AG04449 (cell line): ENCODE measurements at regions of chr7 and their contacts with region 1.

Region 1: DNA sequence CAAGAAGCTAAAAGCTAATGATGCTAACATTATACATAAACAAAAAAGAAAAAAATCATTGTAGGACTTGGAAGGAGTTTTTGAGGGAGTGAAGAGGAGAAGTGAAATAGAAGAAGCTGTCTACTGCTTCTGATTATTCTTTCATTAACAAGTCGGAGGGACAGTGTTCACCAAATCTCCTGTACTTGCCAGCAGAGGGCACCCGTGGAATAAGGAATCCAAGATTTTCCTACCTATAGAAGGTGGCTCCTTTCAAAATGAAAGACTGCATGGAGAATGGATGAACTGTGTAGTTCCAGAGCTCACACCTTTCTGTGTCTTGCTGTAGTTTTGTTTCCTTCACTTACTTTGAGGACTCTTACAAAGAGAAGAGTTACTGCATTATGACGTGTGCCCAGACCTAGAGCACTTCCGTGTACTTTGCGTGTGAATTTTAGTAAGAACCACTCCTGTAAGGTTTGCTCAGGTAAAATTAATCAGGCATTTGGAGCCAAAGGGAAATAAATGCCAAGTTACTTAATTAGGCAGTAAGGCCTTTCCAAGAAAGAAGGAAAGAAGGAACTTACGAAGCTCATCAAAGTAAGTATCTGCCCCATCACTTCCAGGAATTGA is 145.1 kb downstream of the SEMA3D start:
- DNase-seq: no peak
- H3K4me3 ChIP-seq: no peak overlapping the region
- CTCF ChIP-seq: peak; percentile 71

Region 2: DNA sequence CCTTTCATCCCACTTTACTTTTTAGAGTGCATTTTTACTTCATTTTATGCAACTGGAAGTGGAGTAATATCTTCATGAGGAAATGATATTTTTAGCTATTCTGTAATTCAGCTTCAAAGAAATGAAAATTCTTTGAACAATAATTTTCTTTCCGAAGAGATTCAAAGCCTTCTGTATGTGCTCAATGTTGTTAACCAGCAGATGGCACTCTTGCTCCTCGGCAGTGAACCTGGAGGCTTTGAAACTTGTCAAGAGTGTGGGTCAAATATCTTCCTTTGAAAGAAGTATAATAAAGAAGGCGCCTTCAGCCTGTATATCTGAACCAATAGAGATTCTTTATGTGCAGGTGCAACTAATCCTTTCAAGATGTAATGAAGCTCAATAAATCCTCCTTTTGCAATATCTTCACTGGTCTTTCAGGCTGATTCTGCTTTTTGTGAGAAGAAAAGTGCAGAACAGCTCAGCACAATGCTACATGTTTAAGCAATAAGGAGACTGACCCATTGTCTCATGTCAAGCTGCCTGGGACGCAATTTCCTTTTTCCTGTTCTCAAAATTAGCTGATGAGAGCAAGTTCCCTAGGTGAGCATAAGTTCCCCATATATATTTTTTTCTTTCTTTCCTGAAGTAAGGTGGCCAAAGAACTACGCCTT is 1105.5 kb before region 1 on chr7:
- CTCF ChIA-PET with region 1: interaction called, 12 read pairs
- POLR2A ChIA-PET with region 1: no interaction called
- DNase-seq: peak; percentile 21
- H3K4me3 ChIP-seq: no peak overlapping the region
- CTCF ChIP-seq: peak; percentile 82

Region 3: DNA sequence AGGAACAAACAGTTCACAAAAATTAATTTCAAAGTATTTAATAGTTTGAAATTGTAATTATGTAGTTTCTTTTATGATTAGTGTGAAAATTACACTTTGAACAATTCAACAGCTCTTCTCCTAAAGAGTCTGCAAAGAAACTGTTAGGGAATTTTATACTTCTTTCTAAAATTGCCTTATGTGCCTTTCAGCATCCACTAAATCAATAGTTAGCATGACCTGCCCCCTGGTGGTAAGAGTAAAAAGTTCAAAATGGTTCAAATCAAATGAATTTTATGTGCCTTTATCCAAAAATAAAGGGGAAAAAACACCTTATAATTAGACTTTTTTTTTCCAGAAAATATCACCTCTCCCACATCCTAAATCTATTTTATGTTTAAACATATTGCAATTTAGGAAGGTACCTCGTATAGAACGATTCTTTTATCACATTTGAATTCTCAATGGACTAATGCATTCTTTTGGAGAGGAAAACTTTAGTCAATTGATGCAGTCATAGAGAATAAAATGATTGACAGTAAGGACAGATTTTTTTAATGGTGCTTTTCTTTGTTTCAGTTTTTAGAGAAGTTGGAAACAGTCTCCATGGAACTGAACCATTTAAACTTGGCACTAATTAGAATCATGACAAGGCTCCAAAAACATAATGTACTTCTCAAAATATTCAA is 18.5 kb before region 1 on chr7:
- CTCF ChIA-PET with region 1: no interaction called
- POLR2A ChIA-PET with region 1: no interaction called
- DNase-seq: no peak
- H3K4me3 ChIP-seq: no peak overlapping the region
- CTCF ChIP-seq: peak; percentile 25

Region 4: DNA sequence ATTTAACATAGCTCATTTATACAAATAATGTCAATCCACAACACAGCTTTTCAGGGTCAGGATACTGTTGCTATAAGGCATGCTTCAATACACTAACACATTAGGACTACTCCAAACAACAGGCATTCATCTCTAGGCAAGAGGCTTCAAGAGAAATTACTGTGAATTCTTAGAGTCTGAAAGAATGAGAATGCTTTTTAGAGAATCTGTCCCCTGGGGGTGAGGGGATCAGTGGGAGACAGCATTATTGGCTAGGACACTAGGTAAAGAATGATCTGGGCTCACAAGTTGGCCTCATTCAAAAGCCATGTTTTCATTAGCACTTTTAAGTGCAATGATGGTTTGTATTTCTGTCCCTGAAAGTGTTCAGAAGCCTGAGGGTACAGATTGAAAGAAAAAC is 12.6 kb after region 1 on chr7:
- CTCF ChIA-PET with region 1: interaction called, 32 read pairs
- POLR2A ChIA-PET with region 1: no interaction called
- DNase-seq: no peak
- H3K4me3 ChIP-seq: no peak overlapping the region
- CTCF ChIP-seq: no peak

Region 5: DNA sequence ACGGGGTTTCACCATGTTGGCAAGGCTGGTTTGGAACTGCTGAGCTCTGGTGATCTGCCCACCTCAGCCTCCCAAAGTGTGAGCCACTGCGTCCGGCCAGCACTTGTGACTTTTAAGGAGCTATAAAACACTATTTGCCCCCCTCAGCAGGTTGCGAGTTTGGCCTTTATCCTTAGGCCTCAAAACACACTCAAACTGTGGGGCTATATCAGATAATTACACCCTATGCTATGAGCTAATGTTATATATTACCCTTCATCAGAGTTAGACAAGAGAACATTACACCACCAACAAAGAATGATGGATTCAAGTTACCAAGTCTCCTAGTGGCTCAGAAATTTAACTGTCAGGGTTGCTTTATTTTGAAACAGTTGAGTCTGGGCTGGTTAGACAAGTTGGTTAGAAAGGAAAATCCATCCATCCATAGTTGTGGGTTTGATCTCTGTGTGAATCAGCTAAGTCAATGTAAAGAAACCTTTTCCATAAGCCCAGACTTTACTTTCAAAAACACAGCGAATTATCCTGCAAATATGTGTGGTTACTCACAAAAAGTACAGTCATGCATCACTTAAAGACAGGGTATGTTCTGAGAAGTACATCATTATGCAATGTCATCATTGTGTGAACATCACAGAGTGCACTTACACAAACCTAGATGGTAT is 29.4 kb after region 1 on chr7:
- CTCF ChIA-PET with region 1: interaction called, 10 read pairs
- POLR2A ChIA-PET with region 1: no interaction called
- DNase-seq: peak; percentile 59
- H3K4me3 ChIP-seq: no peak overlapping the region
- CTCF ChIP-seq: no peak

Region 6: DNA sequence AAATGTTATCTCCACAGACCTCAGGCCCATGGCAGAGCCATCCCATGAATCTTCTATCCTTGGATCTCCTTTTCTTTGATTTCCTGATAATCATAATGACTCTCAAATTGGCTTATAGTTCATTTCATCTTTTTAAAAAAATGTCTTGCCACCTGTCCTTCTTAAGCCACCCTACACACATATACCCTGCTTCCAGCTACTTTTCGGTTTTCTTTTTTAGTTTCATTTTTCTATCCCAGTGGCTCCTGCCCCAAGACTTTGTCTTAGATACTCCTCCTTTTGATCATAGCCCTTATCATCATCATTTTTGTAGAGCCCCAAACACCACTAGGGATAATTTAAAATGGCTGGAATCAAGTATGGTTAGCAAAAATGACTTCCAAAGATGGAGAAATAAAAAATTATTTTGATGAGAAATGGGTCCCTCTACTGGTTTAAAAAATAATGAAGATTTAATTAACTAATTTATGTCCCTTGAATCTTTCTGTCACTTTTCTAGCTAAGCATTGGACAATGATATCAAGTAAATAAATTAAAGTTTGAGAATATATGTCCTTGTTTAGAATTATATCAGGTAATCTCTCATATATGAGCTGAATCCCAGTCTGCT is 422.4 kb after region 1 on chr7:
- CTCF ChIA-PET with region 1: interaction called, 21 read pairs
- POLR2A ChIA-PET with region 1: no interaction called
- DNase-seq: no peak
- H3K4me3 ChIP-seq: no peak overlapping the region
- CTCF ChIP-seq: no peak

Region 7: DNA sequence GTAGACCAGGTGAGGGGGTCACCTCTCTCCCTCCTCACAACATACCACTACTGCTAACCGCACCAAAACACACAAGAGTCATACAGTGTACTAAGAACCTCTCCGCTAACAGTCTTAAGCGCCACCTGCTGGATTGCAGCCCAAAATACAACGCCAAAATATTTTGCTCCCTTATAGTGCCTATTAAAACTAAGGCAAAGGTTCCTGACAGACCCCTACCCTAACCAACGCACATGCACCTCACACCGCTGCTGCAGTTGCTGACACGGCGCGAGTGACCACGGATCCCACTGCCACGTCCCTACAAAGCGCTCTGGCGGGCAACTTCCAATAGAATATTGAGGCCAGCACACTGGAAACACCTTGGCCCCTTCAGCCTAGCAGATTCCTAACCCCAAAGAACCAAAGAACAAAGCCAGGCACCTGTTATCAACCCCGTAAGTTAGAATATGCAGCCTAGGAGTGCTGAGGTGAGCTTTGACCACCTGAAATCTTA is 708.8 kb after region 1 on chr7:
- CTCF ChIA-PET with region 1: interaction called, 34 read pairs
- POLR2A ChIA-PET with region 1: no interaction called
- DNase-seq: no peak
- H3K4me3 ChIP-seq: no peak overlapping the region
- CTCF ChIP-seq: peak; percentile 67

Region 8: DNA sequence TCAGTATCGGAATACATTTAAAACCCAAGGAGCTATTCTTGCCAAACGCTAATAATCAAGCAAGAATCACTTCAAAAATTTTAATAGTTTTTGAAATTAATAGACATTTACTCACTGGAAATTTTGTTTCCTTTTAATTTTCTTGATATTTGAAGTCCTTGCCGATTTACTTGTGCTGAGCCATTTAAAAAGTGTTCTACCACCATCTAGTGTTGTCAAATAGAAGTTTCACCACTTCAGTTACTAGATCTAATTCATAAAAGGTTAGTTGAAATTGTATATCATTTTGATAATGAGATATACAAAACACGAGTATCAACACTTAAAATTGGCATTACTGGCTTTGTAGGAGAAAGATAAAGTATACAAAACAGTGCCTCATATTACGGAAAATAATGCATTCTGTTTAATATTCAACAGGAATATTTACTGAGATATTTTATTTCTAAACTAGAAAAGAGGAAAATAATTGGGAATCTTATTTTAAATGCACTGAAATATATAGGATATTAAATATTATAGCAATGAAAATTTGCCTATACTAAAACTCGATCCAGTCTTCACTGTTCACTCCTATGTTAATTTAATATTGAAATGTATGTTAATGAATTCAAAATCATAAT is 810.0 kb after region 1 on chr7:
- CTCF ChIA-PET with region 1: interaction called, 10 read pairs
- POLR2A ChIA-PET with region 1: no interaction called
- DNase-seq: peak; percentile 17
- H3K4me3 ChIP-seq: no peak overlapping the region
- CTCF ChIP-seq: peak; percentile 20